ENCODE measurements at regions of chr4 and their contacts with region 1.

Region 1: GRCh38 chr4:84503495-84504437 is 4.7 kb upstream of the NKX6-1 start:
- DNase-seq: peak; percentile 19 to 36
- H3K4me3 ChIP-seq: no peak overlapping the region
- H3K27ac ChIP-seq: no peak overlapping the region
- H3K4me1 ChIP-seq: no peaks in the 10 kb centered on the region
- H3K27me3 ChIP-seq: no peaks in the 10 kb centered on the region
- CTCF ChIP-seq: peak; percentile 68

Region 2: GRCh38 chr4:83490876-83491450 is 1012.8 kb before region 1 on chr4:
- CTCF ChIA-PET with region 1: no interaction called
- POLR2A ChIA-PET with region 1: no interaction called
- intact Hi-C with region 1: loop called (anchors 10 kb)
- DNase-seq: no peak
- H3K4me3 ChIP-seq: no peak overlapping the region
- H3K27ac ChIP-seq: no peak overlapping the region
- H3K4me1 ChIP-seq: no peaks in the 10 kb centered on the region
- H3K27me3 ChIP-seq: no peaks in the 10 kb centered on the region
- CTCF ChIP-seq: peak; percentile 82

Region 3: DNA sequence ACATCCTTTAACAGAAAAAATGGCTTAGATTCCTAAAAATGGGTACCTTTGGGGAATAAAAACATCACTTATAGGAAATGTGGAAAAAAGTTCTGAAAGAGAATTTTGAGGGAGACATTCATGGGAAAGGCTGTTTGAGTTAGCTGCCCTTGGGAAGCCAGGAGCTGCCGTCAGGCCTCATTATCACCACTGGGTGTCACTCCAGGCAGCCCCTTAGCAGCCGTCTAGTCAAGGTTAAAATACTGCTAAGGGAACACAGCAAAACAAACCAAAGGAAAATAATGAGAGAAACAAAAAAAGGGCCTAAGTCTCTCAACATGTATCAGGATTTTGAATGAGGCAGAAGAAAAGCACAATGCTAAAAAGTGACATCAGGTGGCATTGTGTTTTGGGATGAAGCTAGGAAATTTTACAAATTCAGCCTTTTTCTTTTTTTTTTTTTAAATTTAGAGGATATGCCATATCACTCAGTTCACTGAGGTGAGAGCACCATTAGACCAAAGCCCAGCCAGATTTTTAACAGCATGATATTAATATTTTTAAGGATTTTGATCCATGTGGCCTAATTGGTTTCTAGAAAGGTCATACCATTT is 732.6 kb before region 1 on chr4:
- CTCF ChIA-PET with region 1: interaction called, 4 read pairs
- POLR2A ChIA-PET with region 1: no interaction called
- intact Hi-C with region 1: loop called (anchors 5 kb)
- DNase-seq: peak in 1 of 2 experiments; percentile 51
- H3K4me3 ChIP-seq: no peak overlapping the region
- H3K27ac ChIP-seq: no peak overlapping the region
- H3K4me1 ChIP-seq: no peaks in the 10 kb centered on the region
- H3K27me3 ChIP-seq: no peaks in the 10 kb centered on the region
- CTCF ChIP-seq: peak; percentile 73

Region 4: GRCh38 chr4:83961575-83961974 is 542.2 kb before region 1 on chr4:
- CTCF ChIA-PET with region 1: no interaction called
- POLR2A ChIA-PET with region 1: no interaction called
- intact Hi-C with region 1: loop called (anchors 5 kb)
- DNase-seq: peak in 1 of 2 experiments; percentile 0
- H3K4me3 ChIP-seq: no peak overlapping the region
- H3K27ac ChIP-seq: no peak overlapping the region
- H3K4me1 ChIP-seq: no peaks in the 10 kb centered on the region
- H3K27me3 ChIP-seq: no peaks in the 10 kb centered on the region
- CTCF ChIP-seq: peak; percentile 55; the same call in 1 of the 2 replicates

Region 5: GRCh38 chr4:84459783-84460182 is 44.0 kb before region 1 on chr4:
- CTCF ChIA-PET with region 1: no interaction called
- POLR2A ChIA-PET with region 1: no interaction called
- intact Hi-C with region 1: loop called (anchors 2 kb)
- DNase-seq: no peak
- H3K4me3 ChIP-seq: no peak overlapping the region
- H3K27ac ChIP-seq: no peak overlapping the region
- H3K4me1 ChIP-seq: no peaks in the 10 kb centered on the region
- H3K27me3 ChIP-seq: no peaks in the 10 kb centered on the region
- CTCF ChIP-seq: no peak

Region 6: DNA sequence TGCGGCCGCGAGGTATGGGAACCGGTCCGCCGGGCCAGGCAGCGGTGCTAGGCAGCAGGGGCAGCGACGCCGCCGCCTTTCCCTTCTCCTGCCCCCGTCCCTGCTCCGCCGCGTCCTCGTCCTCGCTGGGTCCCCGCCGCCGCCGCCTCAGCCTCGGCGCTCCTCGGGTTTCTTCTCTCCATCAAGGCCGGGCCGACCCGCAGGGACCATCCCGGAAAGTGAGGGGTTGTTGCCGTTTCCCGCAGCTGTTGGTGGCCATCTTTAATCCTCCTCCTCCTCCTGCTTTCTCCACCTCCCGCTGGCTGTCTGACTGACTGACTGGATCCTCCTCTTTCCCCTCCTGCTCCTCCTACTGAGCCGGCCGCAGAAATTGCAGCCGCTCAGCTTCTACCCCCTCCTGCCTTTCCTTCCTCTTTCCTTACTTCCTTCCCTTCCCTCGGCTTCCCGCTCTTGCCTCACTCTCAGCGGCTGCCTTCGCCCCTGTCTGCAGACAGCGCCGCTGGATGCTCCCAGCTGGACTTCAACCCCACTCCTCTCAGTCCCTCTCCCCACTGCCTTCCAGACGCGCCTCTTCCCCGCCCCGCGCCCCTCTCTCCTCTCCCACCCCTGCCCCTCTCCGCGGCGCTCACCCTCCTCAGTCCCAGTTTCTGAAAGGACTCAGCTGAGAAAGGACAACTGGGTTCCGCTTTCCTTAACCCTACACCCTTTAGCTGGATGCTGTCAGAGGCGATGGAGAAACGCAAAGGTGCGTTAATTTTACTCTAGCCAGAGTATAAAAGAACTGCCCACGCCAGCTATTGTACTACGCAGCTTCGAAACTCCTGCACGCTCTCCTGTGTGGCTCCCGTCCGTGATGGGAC is 462.8 kb after region 1 on chr4 and contains the start of gene WDFY3:
- CTCF ChIA-PET with region 1: no interaction called
- POLR2A ChIA-PET with region 1: no interaction called
- intact Hi-C with region 1: loop called (anchors 5 kb)
- DNase-seq: peak; percentile 65
- H3K4me3 ChIP-seq: peak within 1 kb of the TSS; percentile 72
- H3K27ac ChIP-seq: 0 out of 2 replicates have a peak within 1 kb of the TSS, but pooled peaks have one; percentile 43
- H3K4me1 ChIP-seq: peaks cover 25% of the 10 kb centered on the region
- H3K27me3 ChIP-seq: no peaks in the 10 kb centered on the region
- CTCF ChIP-seq: no peak
- total RNA-seq, gene WDFY3: 35.4 and 46.3 TPM in 2 replicates